ENCODE measurements at regions of chr7 and their contacts with region 1.

Region 1: DNA sequence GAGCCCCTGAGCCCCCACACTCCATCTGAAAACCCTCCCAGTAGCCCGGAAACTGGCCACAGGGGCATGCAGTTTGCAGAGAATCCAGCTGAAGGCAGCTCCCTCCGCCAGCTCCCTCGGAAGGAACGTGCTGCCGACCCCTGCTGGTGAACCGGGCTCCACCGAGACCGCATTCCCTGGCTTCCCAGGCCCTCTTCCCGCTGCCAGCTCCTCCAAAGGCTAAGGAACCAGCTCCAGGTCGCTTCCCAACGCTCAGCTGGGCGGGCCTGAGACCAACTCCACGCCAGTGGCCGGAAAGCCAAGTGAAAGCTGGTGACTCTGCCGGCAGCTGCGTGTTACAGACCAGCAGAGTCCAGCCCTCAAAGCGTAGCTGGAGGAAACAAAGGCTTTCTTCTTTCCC is 35.8 kb downstream of the GPER1 start:
- DNase-seq: peak; percentile 43 to 94
- H3K4me3 ChIP-seq: peak overlapping the region; percentile 10 to 60
- H3K27ac ChIP-seq: peak overlapping the region; percentile 84 to 91
- H3K4me1 ChIP-seq: peaks cover 7 to 16% of the 10 kb centered on the region in 2 donors
- H3K27me3 ChIP-seq: no peaks in the 10 kb centered on the region
- CTCF ChIP-seq: peak; percentile 66 to 72 (median 70)

Region 2: DNA sequence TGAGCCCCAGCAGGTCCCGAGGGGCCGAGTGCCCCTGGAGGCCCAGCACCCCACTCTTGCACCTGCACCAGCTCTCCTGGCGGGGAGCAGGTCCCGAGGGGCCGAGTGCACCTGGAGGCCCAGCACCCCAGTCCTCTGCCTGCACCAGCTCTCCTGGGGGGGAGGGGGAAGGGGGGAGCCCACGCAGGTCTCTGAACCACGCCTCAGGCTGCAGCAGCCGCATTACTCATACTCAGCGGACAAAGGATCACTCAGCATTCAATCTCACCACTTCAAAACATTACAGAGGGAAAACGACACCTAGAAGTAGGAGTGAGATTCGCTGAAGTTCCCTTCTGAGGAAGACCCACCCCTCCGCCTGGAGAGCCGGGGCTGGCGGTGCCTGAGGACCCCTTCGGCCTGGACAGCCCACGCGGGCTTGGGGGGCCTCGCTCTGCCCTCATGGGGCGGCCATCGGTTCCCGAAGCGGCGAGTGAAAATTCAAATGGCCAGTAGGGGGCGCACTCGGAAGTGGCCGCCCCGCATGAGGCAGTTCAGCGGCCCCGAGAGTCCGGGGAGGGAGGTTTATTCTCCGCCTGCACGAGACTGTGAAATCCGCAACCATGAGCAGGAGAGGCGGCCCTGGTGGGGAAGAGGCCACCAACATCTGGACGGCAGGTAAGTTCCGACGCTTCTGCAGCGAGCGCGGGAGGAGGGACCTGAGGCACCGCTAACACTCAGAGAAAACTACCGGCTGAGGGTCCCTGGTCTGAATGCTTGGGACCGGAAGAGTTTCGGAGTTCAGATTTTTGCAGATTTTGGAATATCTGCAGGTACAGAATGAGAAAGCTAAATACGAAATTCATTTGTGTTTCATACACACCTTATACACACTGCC is 36.9 kb before region 1 on chr7:
- intact Hi-C with region 1: loop called (anchors 1 kb)
- DNase-seq: peak in 1 of 2 donors; percentile 80
- H3K4me3 ChIP-seq: peak overlapping the region; percentile 56 to 57
- H3K27ac ChIP-seq: peak overlapping the region; percentile 11 to 45
- H3K4me1 ChIP-seq: peaks cover 11 to 30% of the 10 kb centered on the region in 2 donors
- H3K27me3 ChIP-seq: no peaks in the 10 kb centered on the region
- CTCF ChIP-seq: peak; percentile 84 to 93 (median 87)

Region 3: DNA sequence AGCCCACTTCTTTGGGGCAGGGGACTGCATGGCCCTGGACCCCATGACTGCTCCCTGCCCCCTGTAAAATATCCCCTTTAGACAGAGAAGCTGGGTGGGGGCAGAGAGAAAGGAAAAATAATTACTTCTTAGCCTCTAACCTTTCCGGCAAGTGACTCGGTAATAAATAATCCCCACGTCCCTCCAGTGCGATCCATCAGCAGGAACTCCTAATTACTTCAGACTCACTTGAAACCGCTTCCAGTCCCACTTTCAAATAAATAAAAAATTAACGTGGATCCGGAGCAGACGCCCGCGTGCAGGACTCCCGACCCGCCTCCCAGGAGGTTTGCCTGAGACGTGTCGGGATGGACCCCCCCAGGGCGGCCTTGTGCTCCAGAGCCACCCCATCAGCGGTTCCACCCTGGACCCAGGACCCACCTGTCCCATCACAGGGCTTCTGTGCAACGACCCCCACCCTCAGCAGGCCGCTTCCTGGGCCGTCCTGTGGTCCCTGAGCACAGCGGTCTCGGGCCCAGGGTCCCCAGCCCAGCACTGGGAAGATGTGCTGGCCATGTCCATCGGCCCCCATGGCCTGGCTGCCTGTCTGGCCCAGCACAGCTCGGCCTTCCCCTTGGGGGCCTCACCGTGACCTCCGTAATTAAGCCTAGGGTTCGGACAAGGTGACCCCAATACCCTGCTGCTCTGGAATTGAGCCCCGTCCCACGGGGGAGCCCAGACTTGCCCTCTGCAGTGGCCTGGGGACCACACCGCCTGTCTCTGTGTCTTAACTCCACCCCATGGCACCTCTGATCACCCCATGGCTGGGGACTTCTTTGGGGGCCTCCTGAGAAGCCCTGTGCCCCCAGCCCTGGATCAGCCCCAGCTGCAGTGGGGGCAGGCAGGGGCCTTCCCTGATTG is 217.0 kb after region 1 on chr7:
- intact Hi-C with region 1: no loop called
- DNase-seq: no peak
- H3K4me3 ChIP-seq: no peak overlapping the region
- H3K27ac ChIP-seq: no peak overlapping the region
- H3K4me1 ChIP-seq: no peaks in the 10 kb centered on the region
- H3K27me3 ChIP-seq: no peaks in the 10 kb centered on the region
- CTCF ChIP-seq: no peak